ENCODE measurements at regions of chr5 and their contacts with region 1.

Region 1: GRCh38 chr5:91383027-91383955 is at the start of gene ARRDC3:
- DNase-seq: peak; percentile 97
- H3K4me3 Mint-ChIP-seq: peak within 1 kb of the TSS; percentile 87
- H3K27ac Mint-ChIP-seq: peak within 1 kb of the TSS; percentile 100
- H3K4me1 Mint-ChIP-seq: peaks cover 23% of the 10 kb centered on the region
- H3K27me3 Mint-ChIP-seq: no peaks in the 10 kb centered on the region

Region 2: GRCh38 chr5:91061946-91062562 is 321.2 kb before region 1 on chr5:
- CTCF ChIA-PET with region 1: no interaction called
- DNase-seq: no peak
- H3K4me3 Mint-ChIP-seq: no peak overlapping the region
- H3K27ac Mint-ChIP-seq: no peak overlapping the region
- H3K4me1 Mint-ChIP-seq: peaks cover 6% of the 10 kb centered on the region
- H3K27me3 Mint-ChIP-seq: peaks cover 9% of the 10 kb centered on the region

Region 3: GRCh38 chr5:91101600-91102379 is 281.5 kb before region 1 on chr5:
- CTCF ChIA-PET with region 1: interaction called, 35 read pairs
- DNase-seq: peak; percentile 66
- H3K4me3 Mint-ChIP-seq: no peak overlapping the region
- H3K27ac Mint-ChIP-seq: no peak overlapping the region
- H3K4me1 Mint-ChIP-seq: no peaks in the 10 kb centered on the region
- H3K27me3 Mint-ChIP-seq: peaks cover 12% of the 10 kb centered on the region

Region 4: GRCh38 chr5:91219803-91220371 is 163.4 kb before region 1 on chr5:
- CTCF ChIA-PET with region 1: interaction called, 106 read pairs
- DNase-seq: peak; percentile 55
- H3K4me3 Mint-ChIP-seq: no peak overlapping the region
- H3K27ac Mint-ChIP-seq: no peak overlapping the region
- H3K4me1 Mint-ChIP-seq: no peaks in the 10 kb centered on the region
- H3K27me3 Mint-ChIP-seq: peaks cover 20% of the 10 kb centered on the region

Region 5: DNA sequence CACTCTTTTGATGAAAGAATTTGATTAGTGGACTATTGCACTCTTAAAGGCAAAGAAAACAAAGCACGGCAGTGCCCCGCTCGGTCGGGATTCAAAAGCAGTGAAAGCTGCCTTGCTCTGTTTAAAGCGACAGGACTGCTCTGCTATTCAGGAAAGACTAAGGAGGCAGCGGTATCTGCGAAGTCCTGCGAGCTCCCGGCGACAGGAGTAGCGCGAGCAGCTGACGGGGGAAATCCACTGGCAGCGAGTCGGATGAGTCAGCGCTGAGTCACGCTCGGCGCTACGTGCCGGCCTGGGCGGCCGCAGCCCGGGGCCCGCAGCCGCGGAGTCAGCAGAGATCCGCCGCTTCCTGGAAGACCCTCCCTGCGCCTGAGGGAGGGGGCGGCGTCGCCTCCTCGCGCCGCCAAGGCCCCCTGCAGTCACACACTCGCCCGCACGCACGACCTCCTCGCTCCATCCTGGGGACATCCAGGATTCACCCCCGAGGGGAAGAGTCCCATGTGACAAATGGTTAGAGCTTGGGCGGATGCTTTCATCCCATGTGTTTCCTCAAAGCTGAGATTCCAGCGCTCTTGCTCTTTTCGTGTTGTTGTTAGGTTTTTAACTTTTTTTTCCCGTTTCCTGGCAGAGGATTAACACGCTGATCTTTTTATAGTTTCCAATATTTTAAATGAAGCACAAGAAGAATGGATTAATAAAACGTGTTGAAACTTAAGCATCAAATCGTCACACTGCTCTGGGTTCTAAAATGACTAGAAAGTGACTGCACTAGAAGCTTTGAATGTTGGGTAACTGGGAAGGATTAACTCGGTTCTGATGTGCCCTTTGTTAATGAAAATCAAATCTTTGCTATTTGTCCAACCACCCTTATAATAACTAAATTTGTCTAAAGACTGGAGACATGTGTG is 102.7 kb before region 1 on chr5:
- CTCF ChIA-PET with region 1: interaction called, 21 read pairs
- DNase-seq: peak; percentile 85
- H3K4me3 Mint-ChIP-seq: peak overlapping the region; percentile 76
- H3K27ac Mint-ChIP-seq: peak overlapping the region; percentile 87
- H3K4me1 Mint-ChIP-seq: peaks cover 22% of the 10 kb centered on the region
- H3K27me3 Mint-ChIP-seq: peaks cover 36% of the 10 kb centered on the region

Region 6: GRCh38 chr5:91397791-91398190 is 14.5 kb after region 1 on chr5:
- CTCF ChIA-PET with region 1: interaction called, 19 read pairs
- DNase-seq: no peak
- H3K4me3 Mint-ChIP-seq: no peak overlapping the region
- H3K27ac Mint-ChIP-seq: no peak overlapping the region
- H3K4me1 Mint-ChIP-seq: peaks cover 8% of the 10 kb centered on the region
- H3K27me3 Mint-ChIP-seq: no peaks in the 10 kb centered on the region

Measured in activated naive CD4-positive, alpha-beta T cell treated with anti-CD3 and anti-CD28 coated beads, Interleukin-2, amount 10 ng/mL, durations not matched to agents 7 days and 5 days (primary cell).